Heart right ventricle (tissue), 16 donors: ENCODE measurements at regions of chr4 and their contacts with region 1.

Region 1: GRCh38 chr4:168995537-168996295 is 14.3 kb downstream of the CBR4 start:
- DNase-seq: no peak
- ATAC-seq: peak in 7 of 8 donors; percentile 59 to 76 (median 70)
- H3K4me3 ChIP-seq: no peak overlapping the region
- H3K27ac ChIP-seq: no peak overlapping the region
- H3K4me1 ChIP-seq: peaks cover 0 to 38% (median 18%) of the 10 kb centered on the region in 9 donors
- H3K27me3 ChIP-seq: no peaks in the 10 kb centered on the region
- CTCF ChIP-seq: peak in 8 of 9 donors; percentile 8 to 52 (median 36)

Region 2: GRCh38 chr4:168685136-168685809 is 310.4 kb before region 1 on chr4:
- intact Hi-C with region 1: no loop called
- DNase-seq: no peak
- ATAC-seq: peak in 3 of 8 donors; percentile 5 to 68 (median 62)
- H3K4me3 ChIP-seq: no peak overlapping the region
- H3K27ac ChIP-seq: peak overlapping the region in 1 of 10 donors; percentile 5
- H3K4me1 ChIP-seq: peaks cover 0 to 11% (median 5%) of the 10 kb centered on the region in 9 donors
- H3K27me3 ChIP-seq: no peaks in the 10 kb centered on the region
- CTCF ChIP-seq: no peak

Region 3: DNA sequence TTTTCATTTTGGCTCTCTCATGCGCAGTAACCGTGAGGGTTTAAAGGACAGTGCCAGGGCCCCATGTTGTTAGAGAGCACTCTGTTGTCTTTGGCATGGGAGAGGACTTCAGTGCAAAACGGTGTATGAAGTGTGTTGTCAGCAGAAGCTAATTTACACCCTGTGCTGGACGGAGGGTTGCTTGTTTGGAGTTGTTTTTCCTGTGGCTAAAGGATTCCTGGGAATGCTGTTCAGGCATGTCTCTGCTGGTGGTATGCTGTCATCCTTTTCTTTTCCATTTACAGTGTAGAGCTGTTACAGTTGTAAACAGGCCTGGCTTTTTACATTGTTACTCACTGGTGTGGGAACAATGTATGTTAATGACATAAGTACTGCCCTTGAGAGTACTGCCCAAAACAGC is 192.0 kb before region 1 on chr4:
- intact Hi-C with region 1: no loop called
- DNase-seq: no peak
- ATAC-seq: peak in 7 of 8 donors; percentile 54 to 87 (median 74)
- H3K4me3 ChIP-seq: no peak overlapping the region
- H3K27ac ChIP-seq: peak overlapping the region in 7 of 10 donors; percentile 8 to 73 (median 53)
- H3K4me1 ChIP-seq: peaks cover 0 to 32% (median 16%) of the 10 kb centered on the region in 9 donors
- H3K27me3 ChIP-seq: no peaks in the 10 kb centered on the region
- CTCF ChIP-seq: no peak

Region 4: DNA sequence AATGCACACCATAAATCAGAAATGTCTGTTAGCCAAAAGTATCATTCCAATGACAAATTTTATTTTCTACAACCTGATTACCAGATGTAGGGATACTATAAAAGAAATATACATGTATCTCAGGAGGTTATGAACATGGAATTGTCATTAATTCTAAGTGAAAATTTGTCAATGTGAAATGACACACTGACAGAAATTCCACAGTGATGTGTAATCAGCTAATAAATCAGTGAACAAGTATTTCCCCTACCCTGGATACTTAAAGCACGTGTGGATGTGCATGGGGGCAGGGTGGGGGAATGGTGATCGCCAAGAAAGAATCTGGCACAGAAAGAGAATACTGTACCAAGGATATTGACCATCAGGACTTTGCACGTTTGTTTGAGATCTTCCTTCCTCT is 151.5 kb after region 1 on chr4:
- intact Hi-C with region 1: no loop called
- DNase-seq: no peak
- ATAC-seq: no peak
- H3K4me3 ChIP-seq: no peak overlapping the region
- H3K27ac ChIP-seq: no peak overlapping the region
- H3K4me1 ChIP-seq: peaks cover 0 to 18% (median 8%) of the 10 kb centered on the region in 9 donors
- H3K27me3 ChIP-seq: no peaks in the 10 kb centered on the region
- CTCF ChIP-seq: no peak

Region 5: GRCh38 chr4:169566021-169566818 is 570.5 kb after region 1 on chr4:
- intact Hi-C with region 1: loop called in 2 of 10 experiments (anchors 5 to 10 kb)
- DNase-seq: peak in 1 of 2 donors; percentile 62
- ATAC-seq: peak in 7 of 8 donors; percentile 68 to 87 (median 81)
- H3K4me3 ChIP-seq: peak overlapping the region in 1 of 10 donors; percentile 18
- H3K27ac ChIP-seq: peak overlapping the region in 1 of 10 donors; percentile 18
- H3K4me1 ChIP-seq: peaks cover 0 to 17% (median 11%) of the 10 kb centered on the region in 9 donors
- H3K27me3 ChIP-seq: no peaks in the 10 kb centered on the region
- CTCF ChIP-seq: peak; percentile 43 to 86 (median 75)